ENCODE measurements at regions of chr3 and their contacts with region 1.

Region 1: GRCh38 chr3:47475570-47476329 is at the start of gene SCAP:
- DNase-seq: peak; percentile 80 to 92 (median 91)
- H3K4me3 ChIP-seq: peak within 1 kb of the TSS; percentile 83 to 89 (median 89)
- H3K4me3 Mint-ChIP-seq: peak within 1 kb of the TSS; percentile 82 to 92
- H3K27ac ChIP-seq: peak within 1 kb of the TSS in 1 of 2 donors; percentile 43
- H3K27ac Mint-ChIP-seq: peak within 1 kb of the TSS in 6 of 7 donors; percentile 40 to 80 (median 74)
- H3K4me1 ChIP-seq: peaks cover 16 to 23% of the 10 kb centered on the region in 2 donors
- H3K4me1 Mint-ChIP-seq: peaks cover 22% of the 10 kb centered on the region
- H3K27me3 ChIP-seq: no peaks in the 10 kb centered on the region
- H3K27me3 Mint-ChIP-seq: no peaks in the 10 kb centered on the region
- CTCF ChIP-seq: peak; percentile 89
- polyA plus RNA-seq, gene SCAP: 26.3 to 27.8 (median 27.7) TPM

Region 2: GRCh38 chr3:47359323-47359722 is 116.4 kb before region 1 on chr3:
- intact Hi-C with region 1: no loop called
- DNase-seq: no peak
- H3K4me3 ChIP-seq: no peak overlapping the region
- H3K4me3 Mint-ChIP-seq: no peak overlapping the region
- H3K27ac ChIP-seq: no peak overlapping the region
- H3K27ac Mint-ChIP-seq: no peak overlapping the region
- H3K4me1 ChIP-seq: peaks cover 14 to 17% of the 10 kb centered on the region in 2 donors
- H3K4me1 Mint-ChIP-seq: peaks cover 10% of the 10 kb centered on the region
- H3K27me3 ChIP-seq: no peaks in the 10 kb centered on the region
- H3K27me3 Mint-ChIP-seq: peaks cover 1 to 9% (median 4%) of the 10 kb centered on the region in 3 donors
- CTCF ChIP-seq: no peak

Region 3: DNA sequence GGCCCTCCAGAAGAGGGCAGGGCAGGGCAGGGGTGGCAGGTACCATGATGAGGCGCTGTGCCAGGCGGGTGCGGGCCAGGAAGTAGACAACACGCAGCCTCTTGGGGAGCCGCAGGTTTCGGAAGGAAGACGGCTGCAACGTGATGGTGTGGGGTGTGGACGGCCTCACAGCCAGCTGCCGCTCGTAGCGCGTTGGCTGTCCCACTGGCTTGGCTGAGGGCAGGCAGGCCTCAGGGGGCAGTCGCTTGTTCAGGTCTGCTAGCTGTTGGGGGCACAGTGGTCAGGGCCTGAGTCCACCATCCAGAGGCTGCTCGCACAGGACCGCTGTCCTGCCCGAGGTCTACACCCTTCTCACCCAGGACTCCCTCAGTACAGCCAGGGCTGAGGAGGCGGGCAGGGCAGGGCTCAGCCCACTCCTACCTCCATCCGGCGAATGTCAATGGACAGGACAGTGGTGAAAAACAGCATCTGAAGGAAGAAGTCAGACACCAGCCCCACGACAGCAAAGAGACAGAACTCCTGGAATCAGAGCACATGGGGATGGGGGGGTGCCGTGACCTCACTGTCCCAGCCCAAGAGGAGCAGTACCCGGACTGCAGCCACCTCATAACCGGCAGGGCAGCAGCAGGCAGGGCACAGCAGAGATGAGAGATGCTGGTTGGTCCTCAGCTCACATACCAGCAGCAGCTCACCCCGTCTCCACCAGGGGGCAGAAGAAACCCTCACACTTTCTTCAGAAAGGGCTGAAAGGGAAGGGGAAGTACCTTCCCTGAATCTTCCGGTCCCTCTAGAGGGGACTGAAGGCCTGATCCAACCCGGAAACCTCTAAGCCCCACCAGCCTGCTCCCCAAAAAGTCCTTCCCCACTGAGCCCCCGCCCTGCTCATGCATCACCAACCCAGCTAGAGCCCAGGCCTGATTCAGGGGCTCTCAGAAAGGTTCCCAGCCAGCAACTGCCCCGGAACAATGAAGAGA is 55.0 kb before region 1 on chr3:
- intact Hi-C with region 1: loop called (anchors 1 to 2 kb)
- DNase-seq: peak; percentile 86 to 90 (median 90)
- H3K4me3 ChIP-seq: peak overlapping the region in 1 of 3 experiments; percentile 58
- H3K4me3 Mint-ChIP-seq: peak overlapping the region; percentile 55 to 67
- H3K27ac ChIP-seq: peak overlapping the region; percentile 44 to 82
- H3K27ac Mint-ChIP-seq: peak overlapping the region; percentile 90 to 98 (median 96)
- H3K4me1 ChIP-seq: peaks cover 9 to 15% of the 10 kb centered on the region in 2 donors
- H3K4me1 Mint-ChIP-seq: peaks cover 12% of the 10 kb centered on the region
- H3K27me3 ChIP-seq: no peaks in the 10 kb centered on the region
- H3K27me3 Mint-ChIP-seq: peaks cover 0 to 1% (median 0%) of the 10 kb centered on the region in 3 donors
- CTCF ChIP-seq: peak; percentile 90